Panc1 (cell line): ENCODE measurements at regions of chr10 and their contacts with region 1.

Region 1: GRCh38 chr10:76336213-76336963 is 905.0 kb downstream of the LRMDA start:
- DNase-seq: no peak
- ATAC-seq: no peak
- H3K4me3 ChIP-seq: no peak overlapping the region
- H3K27ac ChIP-seq: no peak overlapping the region
- H3K4me1 ChIP-seq: no peaks in the 10 kb centered on the region
- H3K27me3 ChIP-seq: peaks cover 6% of the 10 kb centered on the region; the same call in 1 of the 2 replicates
- CTCF ChIP-seq: no peak

Region 2: DNA sequence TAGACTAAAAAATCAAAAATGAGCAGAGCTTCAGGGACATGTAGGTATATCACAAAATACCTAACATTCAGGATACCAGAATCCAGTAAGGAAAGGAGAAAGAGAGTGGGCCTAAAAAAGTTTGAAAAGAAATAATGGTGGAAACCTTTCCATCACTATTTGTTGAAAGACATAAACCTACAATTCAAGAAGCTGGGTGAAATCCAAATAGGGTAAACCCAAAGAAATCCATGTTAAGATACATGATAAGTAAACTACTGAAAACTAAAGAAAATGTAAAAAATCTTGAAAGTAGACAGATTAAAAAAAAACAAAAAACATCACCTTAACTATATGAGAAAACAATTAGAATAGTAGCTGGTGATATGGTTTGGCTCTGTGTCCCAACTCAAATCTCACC is 1023.9 kb before region 1 on chr10:
- CTCF ChIA-PET with region 1: interaction called, 11 read pairs
- POLR2A ChIA-PET with region 1: no interaction called
- in situ Hi-C with region 1: no loop called
- intact Hi-C with region 1: no loop called
- DNase-seq: no peak
- ATAC-seq: no peak
- H3K4me3 ChIP-seq: no peak overlapping the region
- H3K27ac ChIP-seq: no peak overlapping the region
- H3K4me1 ChIP-seq: no peaks in the 10 kb centered on the region
- H3K27me3 ChIP-seq: no peaks in the 10 kb centered on the region; the same call in 1 of the 2 replicates
- CTCF ChIP-seq: no peak

Region 3: DNA sequence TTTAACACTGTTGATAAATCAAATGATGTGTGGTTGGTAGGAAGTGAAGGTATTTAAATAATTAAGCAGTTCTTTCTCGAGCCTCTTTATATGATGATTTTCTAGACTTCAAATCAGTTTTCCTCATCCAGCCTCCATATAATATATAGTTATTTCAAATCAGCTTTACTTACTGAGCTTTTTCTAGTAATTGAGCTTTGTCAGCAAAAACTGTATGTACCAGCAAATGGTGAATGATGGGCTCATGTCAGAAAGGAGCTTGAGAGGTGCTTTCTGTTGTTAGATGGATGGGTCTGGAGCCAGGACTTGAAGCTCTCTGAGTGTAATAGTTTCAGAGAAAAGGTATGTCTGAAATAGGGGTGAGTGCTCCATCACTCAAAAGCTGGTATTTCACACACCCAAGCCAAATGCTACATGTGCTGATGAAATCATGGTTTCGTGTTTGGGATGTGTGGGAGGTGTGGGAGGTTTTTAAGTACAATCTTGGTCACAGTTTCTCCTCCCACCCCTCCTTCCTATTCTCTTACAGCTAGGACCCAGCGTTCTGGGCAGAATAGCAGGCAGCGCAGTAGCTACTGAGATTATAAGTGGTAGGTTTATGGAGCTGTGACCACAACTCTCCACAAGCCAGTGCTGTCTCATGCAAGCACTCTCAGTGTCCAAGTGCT is 849.2 kb before region 1 on chr10:
- CTCF ChIA-PET with region 1: no interaction called
- POLR2A ChIA-PET with region 1: no interaction called
- in situ Hi-C with region 1: no loop called
- intact Hi-C with region 1: no loop called
- DNase-seq: no peak
- ATAC-seq: no peak
- H3K4me3 ChIP-seq: no peak overlapping the region
- H3K27ac ChIP-seq: no peak overlapping the region
- H3K4me1 ChIP-seq: no peaks in the 10 kb centered on the region; the same call in 1 of the 2 replicates
- H3K27me3 ChIP-seq: 0 out of 2 replicates have a peak, but pooled peaks cover 2% of the 10 kb centered on the region
- CTCF ChIP-seq: no peak

Region 4: DNA sequence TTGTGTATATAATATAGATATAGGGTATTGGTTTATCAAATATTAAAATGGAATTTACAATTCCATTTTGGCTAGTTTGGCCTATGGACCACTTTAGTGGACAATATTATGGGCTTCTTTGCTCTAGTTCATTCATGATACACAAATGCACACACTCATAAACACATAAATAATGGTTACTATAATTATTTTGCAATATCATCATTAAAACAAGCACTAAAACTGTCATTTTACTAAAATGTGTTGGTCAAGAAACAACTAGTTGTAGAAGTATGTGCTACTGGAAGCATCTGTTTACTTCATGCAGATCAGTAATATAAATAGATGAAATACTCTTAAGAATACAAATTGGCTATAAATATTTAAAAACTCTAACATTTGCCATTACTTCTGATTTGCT is 226.9 kb after region 1 on chr10:
- CTCF ChIA-PET with region 1: no interaction called
- POLR2A ChIA-PET with region 1: no interaction called
- in situ Hi-C with region 1: no loop called
- intact Hi-C with region 1: no loop called
- DNase-seq: no peak
- ATAC-seq: no peak
- H3K4me3 ChIP-seq: no peak overlapping the region
- H3K27ac ChIP-seq: no peak overlapping the region
- H3K4me1 ChIP-seq: no peaks in the 10 kb centered on the region
- H3K27me3 ChIP-seq: peaks cover 5% of the 10 kb centered on the region; the same call in 1 of the 2 replicates
- CTCF ChIP-seq: no peak